ENCODE measurements at regions of chr1 and their contacts with region 1.

Region 1: DNA sequence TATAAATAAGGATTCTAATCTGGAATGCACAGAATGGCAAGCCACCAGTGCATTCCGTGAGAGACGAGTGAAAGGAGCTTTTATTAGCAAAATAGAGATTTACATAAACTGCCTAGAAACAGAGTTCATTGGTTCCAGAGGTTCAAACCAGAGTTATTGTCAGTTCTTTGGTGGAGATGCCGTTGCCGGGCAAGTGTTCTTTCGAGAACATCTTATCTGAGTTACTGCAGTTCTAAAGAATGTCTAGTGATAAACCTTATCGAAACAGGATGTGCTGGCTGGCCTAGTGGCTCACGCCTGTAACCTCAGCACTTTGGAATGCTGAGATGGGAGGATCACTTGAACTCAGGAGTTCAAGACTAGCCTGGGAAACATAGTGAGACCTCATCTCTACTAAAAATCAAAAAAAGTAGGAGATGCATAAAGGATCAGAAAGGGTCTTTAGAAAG is 19.8 kb upstream of the EVI5 start:
- DNase-seq: peak; percentile 17 to 93
- H3K4me3 ChIP-seq: no peak overlapping the region
- H3K27ac ChIP-seq: peak overlapping the region; percentile 50 to 76
- H3K4me1 ChIP-seq: peaks cover 0 to 9% of the 10 kb centered on the region in 2 donors
- H3K27me3 ChIP-seq: no peaks in the 10 kb centered on the region
- CTCF ChIP-seq: no peak

Region 2: DNA sequence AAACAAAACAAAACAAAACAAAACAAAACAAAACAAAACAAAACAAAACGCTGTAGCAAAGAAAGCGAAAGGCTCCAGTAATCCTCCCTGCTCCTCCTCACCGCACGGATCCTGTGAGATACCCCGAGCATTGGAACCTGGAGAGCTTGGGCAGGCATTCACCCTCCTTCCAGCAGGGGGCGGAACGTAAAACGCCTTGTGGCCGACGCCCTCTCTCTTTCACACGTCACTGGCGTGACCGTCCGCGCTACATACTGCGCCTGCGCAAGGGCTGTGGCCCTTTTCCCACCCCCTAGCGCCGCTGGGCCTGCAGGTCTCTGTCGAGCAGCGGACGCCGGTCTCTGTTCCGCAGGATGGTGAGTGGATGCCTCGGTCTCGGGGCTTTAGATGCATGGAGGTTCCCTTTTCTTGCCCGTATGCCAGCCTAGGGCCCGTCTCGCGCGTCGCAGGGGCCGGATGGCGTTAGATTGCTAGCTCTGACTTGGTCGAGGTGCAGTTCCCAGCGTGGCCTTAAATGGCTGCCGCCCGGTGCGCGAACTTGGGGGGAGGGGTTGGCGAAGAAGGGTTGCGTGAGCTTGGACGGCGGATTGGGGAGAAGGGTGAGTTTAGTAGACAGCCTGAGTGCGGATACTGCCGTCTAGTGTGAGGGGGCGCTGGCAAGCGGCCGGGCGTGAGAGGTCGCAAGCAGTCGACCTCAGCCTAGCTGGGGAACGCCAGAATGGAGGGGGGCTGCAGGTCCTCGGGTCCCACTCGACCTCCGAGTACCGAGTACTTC is 27.2 kb after region 1 on chr1 and contains the start of gene RPL5:
- intact Hi-C with region 1: loop called (anchors 2 kb)
- DNase-seq: peak; percentile 81 to 98
- H3K4me3 ChIP-seq: peak within 1 kb of the TSS; percentile 80
- H3K27ac ChIP-seq: peak within 1 kb of the TSS; percentile 85 to 90
- H3K4me1 ChIP-seq: peaks cover 12 to 16% of the 10 kb centered on the region in 2 donors
- H3K27me3 ChIP-seq: no peaks in the 10 kb centered on the region
- CTCF ChIP-seq: peak; percentile 74 to 95 (median 92)
- total RNA-seq, gene RPL5: 617 TPM